Colonic mucosa (tissue), 4 donors: ENCODE measurements at regions of chr1 and their contacts with region 1.

Region 1: GRCh38 chr1:100147875-100148274 is 14.9 kb downstream of the TRMT13 start:
- DNase-seq: no peak
- H3K4me3 ChIP-seq: no peak overlapping the region
- H3K27ac ChIP-seq: no peak overlapping the region
- H3K4me1 ChIP-seq: no peaks in the 10 kb centered on the region
- H3K27me3 ChIP-seq: no peaks in the 10 kb centered on the region
- CTCF ChIP-seq: no peak

Region 2: GRCh38 chr1:100277866-100278265 is 130.0 kb after region 1 on chr1:
- intact Hi-C with region 1: loop called (anchors 10 kb)
- DNase-seq: no peak
- H3K4me3 ChIP-seq: no peak overlapping the region
- H3K27ac ChIP-seq: no peak overlapping the region
- H3K4me1 ChIP-seq: no peaks in the 10 kb centered on the region
- H3K27me3 ChIP-seq: no peaks in the 10 kb centered on the region
- CTCF ChIP-seq: no peak